Naive thymus-derived CD4-positive, alpha-beta T cell (primary cell): ENCODE measurements at regions of chr1 and their contacts with region 1.

Region 1: DNA sequence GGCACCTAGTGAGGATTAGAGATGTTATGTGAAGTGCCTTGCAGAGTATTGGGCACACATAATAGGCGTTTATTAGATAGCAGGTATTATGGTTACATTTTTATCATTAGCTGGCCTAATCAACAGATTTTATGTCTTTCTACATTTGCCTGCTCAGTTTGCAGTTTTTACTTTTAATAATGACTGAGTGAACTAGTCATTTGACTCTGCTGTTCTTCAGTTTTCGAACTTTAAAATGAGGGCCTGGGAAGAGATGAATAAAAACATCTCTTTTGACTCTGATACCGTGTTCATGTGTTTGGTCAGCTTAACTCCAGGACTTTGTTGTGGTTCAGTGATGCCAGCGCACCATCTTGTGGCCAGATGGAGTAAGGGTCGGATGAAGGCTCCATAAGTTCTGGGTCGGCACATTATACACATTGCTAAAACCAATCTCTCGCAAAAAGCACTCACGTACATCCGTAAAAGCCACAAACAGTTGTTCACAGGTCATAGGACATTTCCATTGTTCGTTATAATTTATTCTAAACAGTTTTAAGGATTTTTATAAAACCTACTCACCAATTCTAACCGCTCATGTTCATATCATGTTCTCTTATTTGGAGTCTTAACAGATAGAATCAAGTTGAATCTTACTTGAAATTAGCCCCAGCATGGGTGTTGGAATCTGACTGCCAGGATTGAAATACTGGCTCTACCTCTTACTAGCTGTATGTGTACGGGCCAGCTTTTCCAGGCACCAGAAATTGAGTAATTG is 78.4 kb upstream of the GPR88 start:
- DNase-seq: peak; percentile 34 to 62 (median 53)
- ATAC-seq: peak; percentile 87
- H3K4me3 ChIP-seq: no peak overlapping the region
- H3K4me3 Mint-ChIP-seq: peak overlapping the region in 8 of 10 donors; percentile 15 to 65 (median 40)
- H3K27ac ChIP-seq: no peak overlapping the region
- H3K27ac Mint-ChIP-seq: peak overlapping the region; percentile 11 to 93 (median 74)
- H3K4me1 ChIP-seq: peaks cover 18 to 22% of the 10 kb centered on the region in 2 donors
- H3K4me1 Mint-ChIP-seq: peaks cover 21 to 81% (median 59%) of the 10 kb centered on the region in 7 donors
- H3K27me3 ChIP-seq: no peaks in the 10 kb centered on the region
- H3K27me3 Mint-ChIP-seq: no peaks in the 10 kb centered on the region

Region 2: DNA sequence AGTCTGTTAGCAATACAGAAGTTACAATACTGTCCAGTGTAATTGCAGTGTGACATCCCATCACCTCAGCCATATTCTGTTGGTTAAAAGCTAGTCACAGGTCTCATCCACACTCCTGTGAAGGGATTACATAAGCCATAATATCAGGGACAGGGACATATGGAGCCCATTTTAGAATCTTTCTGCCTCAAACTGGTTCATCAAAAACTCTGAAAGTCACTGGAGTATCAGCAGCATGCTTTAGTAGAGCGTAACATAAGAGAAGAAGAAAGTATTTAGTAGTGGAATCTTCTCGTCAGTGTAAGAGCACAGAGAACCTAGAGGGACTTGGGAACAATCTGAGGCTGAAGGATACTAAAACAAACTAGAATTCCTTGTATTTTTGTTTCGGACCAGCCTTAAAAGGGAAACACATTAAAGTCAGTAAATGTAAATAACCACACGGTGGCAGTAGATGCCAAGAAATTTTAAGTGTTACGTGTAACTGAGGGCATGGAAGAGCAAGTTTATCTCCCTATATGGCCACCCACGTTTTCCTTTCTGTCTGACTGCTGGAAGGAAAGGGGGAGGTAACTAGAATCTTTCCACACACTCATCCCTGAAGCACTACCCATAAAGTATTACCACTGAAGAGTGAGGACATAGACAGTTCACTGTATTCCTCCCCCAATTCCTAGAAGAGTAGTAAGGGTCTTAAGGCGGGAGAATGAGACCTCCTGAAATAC is 651.0 kb before region 1 on chr1:
- CTCF ChIA-PET with region 1: interaction called, 5 read pairs
- POLR2A ChIA-PET with region 1: no interaction called
- intact Hi-C with region 1: loop called (anchors 1 kb)
- DNase-seq: peak in 7 of 9 donors; percentile 32 to 63 (median 55)
- ATAC-seq: peak; percentile 81
- H3K4me3 ChIP-seq: no peak overlapping the region
- H3K4me3 Mint-ChIP-seq: peak overlapping the region in 1 of 10 donors; percentile 16
- H3K27ac ChIP-seq: no peak overlapping the region
- H3K27ac Mint-ChIP-seq: no peak overlapping the region
- H3K4me1 ChIP-seq: no peaks in the 10 kb centered on the region
- H3K4me1 Mint-ChIP-seq: peaks cover 0 to 11% (median 4%) of the 10 kb centered on the region in 7 donors
- H3K27me3 ChIP-seq: no peaks in the 10 kb centered on the region
- H3K27me3 Mint-ChIP-seq: peaks cover 6 to 21% (median 8%) of the 10 kb centered on the region in 5 donors

Region 3: GRCh38 chr1:100249537-100250257 is 209.8 kb before region 1 on chr1 and contains the start of gene DBT:
- CTCF ChIA-PET with region 1: interaction called, 7 read pairs
- POLR2A ChIA-PET with region 1: interaction called, 3 read pairs
- intact Hi-C with region 1: loop called in 1 of 2 experiments (anchors 1 kb)
- DNase-seq: peak; percentile 64 to 93 (median 88)
- ATAC-seq: peak; percentile 100
- H3K4me3 ChIP-seq: peak within 1 kb of the TSS; percentile 82
- H3K4me3 Mint-ChIP-seq: peak within 1 kb of the TSS in 1 of 10 donors; percentile 30
- H3K27ac ChIP-seq: peak within 1 kb of the TSS; percentile 79
- H3K27ac Mint-ChIP-seq: peak within 1 kb of the TSS in 2 of 9 donors; percentile 22 to 26
- H3K4me1 ChIP-seq: peaks cover 7 to 23% of the 10 kb centered on the region in 2 donors
- H3K4me1 Mint-ChIP-seq: peaks cover 9 to 24% (median 19%) of the 10 kb centered on the region in 7 donors
- H3K27me3 ChIP-seq: no peaks in the 10 kb centered on the region
- H3K27me3 Mint-ChIP-seq: peaks cover 0 to 8% (median 0%) of the 10 kb centered on the region in 5 donors
- total RNA-seq, gene DBT: 9.2 to 18.4 (median 9.7) TPM

Region 4: GRCh38 chr1:100290291-100290690 is 169.2 kb before region 1 on chr1:
- CTCF ChIA-PET with region 1: interaction called, 8 read pairs
- POLR2A ChIA-PET with region 1: interaction called, 3 read pairs
- intact Hi-C with region 1: loop called in 1 of 2 experiments (anchors 1 kb)
- DNase-seq: no peak
- ATAC-seq: no peak
- H3K4me3 ChIP-seq: no peak overlapping the region
- H3K4me3 Mint-ChIP-seq: no peak overlapping the region
- H3K27ac ChIP-seq: no peak overlapping the region
- H3K27ac Mint-ChIP-seq: peak overlapping the region in 2 of 9 donors; percentile 16 to 57
- H3K4me1 ChIP-seq: no peaks in the 10 kb centered on the region
- H3K4me1 Mint-ChIP-seq: peaks cover 0 to 5% (median 3%) of the 10 kb centered on the region in 7 donors
- H3K27me3 ChIP-seq: no peaks in the 10 kb centered on the region
- H3K27me3 Mint-ChIP-seq: no peaks in the 10 kb centered on the region

Region 5: GRCh38 chr1:100423832-100424337 is 35.7 kb before region 1 on chr1:
- CTCF ChIA-PET with region 1: interaction called, 14 read pairs
- POLR2A ChIA-PET with region 1: interaction called, 8 read pairs
- intact Hi-C with region 1: loop called in 1 of 2 experiments (anchors 5 kb)
- DNase-seq: peak in 4 of 9 donors; percentile 26 to 58 (median 52)
- ATAC-seq: peak; percentile 56
- H3K4me3 ChIP-seq: peak overlapping the region; percentile 41
- H3K4me3 Mint-ChIP-seq: peak overlapping the region; percentile 51 to 88 (median 80)
- H3K27ac ChIP-seq: peak overlapping the region; percentile 69
- H3K27ac Mint-ChIP-seq: peak overlapping the region; percentile 85 to 98 (median 92)
- H3K4me1 ChIP-seq: peaks cover 29 to 43% of the 10 kb centered on the region in 2 donors
- H3K4me1 Mint-ChIP-seq: peaks cover 31 to 92% (median 73%) of the 10 kb centered on the region in 7 donors
- H3K27me3 ChIP-seq: no peaks in the 10 kb centered on the region
- H3K27me3 Mint-ChIP-seq: no peaks in the 10 kb centered on the region

Region 6: GRCh38 chr1:100866041-100866900 is 406.7 kb after region 1 on chr1:
- CTCF ChIA-PET with region 1: interaction called, 6 read pairs
- POLR2A ChIA-PET with region 1: no interaction called
- intact Hi-C with region 1: loop called (anchors 1 kb)
- DNase-seq: peak in 4 of 9 donors; percentile 6 to 21 (median 14)
- ATAC-seq: peak; percentile 51
- H3K4me3 ChIP-seq: no peak overlapping the region
- H3K4me3 Mint-ChIP-seq: no peak overlapping the region
- H3K27ac ChIP-seq: no peak overlapping the region
- H3K27ac Mint-ChIP-seq: no peak overlapping the region
- H3K4me1 ChIP-seq: no peaks in the 10 kb centered on the region
- H3K4me1 Mint-ChIP-seq: peaks cover 0 to 2% (median 0%) of the 10 kb centered on the region in 7 donors
- H3K27me3 ChIP-seq: no peaks in the 10 kb centered on the region
- H3K27me3 Mint-ChIP-seq: no peaks in the 10 kb centered on the region